Posterior cingulate gyrus (tissue), 11 donors: ENCODE measurements at regions of chr4 and their contacts with region 1.

Region 1: GRCh38 chr4:151117371-151117962 is 18.0 kb downstream of the RPS3A start:
- DNase-seq: peak in 6 of 10 donors; percentile 29 to 74 (median 50)

Region 2: DNA sequence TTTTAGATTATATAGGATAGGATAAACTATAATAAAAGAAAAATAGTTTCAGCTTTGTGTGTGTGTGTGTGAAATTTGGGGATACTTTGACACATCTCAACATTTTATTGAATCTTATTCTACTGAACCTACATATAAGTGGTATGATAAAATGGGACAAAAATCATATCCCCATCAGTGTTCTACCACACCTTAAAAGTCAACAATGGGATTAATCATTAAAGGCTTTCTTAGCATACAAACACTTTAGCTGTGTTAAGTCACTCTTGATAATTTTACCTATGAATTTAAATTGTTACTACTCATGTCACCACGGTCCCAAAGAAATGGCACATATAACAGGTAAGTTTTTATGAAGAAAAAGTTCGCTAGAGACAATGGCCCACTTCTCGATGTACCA is 64.7 kb before region 1 on chr4:
- intact Hi-C with region 1: no loop called
- DNase-seq: no peak

Region 3: DNA sequence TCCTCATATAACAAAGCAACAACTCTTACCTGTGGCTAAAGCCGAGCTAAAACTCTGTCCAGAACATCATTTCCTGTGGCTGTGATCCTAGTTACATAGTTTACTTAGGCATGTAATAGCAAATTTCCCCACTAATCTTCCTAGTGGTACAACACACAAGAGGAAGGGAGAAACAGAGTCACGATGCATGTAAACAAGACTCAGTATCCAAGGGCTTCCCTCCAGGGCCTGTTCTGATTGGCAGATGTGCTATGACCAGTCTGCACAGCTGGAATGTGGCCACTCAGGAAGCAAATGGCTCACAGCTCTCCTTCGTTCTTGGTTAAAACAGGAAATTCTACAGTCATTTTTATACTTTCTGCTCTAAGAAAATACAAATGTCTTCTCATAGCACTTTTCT is 110.3 kb after region 1 on chr4:
- intact Hi-C with region 1: loop called (anchors 5 kb)
- DNase-seq: peak in 6 of 10 donors; percentile 41 to 87 (median 50)

Region 4: DNA sequence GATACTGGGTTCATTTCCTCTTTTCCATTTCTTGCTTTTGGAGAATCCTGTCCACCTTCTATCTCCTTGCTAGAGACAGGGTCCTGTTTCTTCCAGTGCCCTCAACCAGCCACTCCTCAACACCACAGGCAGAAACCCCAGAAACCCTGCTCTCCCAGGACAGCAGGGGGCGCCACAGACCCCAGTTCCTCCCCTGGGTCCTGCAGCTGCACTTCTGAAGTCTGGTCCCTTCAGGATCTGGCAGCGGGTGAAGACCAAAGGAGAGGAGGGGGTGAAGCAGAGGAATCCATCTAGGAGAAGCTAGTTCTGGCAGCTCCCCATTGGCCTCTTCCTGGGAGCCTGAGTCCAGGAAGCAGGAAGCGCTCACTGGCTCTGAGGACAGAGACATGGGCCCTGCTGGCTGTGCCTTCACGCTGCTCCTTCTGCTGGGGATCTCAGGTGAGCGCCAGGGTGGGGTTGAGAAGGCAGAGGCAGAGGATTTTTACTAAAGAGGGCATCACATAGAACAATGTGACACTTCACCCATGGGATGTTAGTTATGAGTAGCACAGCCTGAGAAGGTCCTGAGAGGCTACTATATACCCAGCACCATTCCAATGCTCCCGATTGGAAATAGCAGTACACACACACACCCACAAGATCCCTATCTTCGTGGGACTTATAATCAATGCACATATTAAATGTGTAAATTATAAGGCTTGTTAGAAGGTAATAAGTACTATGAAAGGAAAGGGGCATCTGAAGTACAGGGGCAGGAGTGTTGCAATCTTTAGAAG is 159.5 kb after region 1 on chr4 and contains the start of gene PRSS48:
- intact Hi-C with region 1: loop called (anchors 1 kb)
- DNase-seq: peak; percentile 69 to 97 (median 83)

Region 5: DNA sequence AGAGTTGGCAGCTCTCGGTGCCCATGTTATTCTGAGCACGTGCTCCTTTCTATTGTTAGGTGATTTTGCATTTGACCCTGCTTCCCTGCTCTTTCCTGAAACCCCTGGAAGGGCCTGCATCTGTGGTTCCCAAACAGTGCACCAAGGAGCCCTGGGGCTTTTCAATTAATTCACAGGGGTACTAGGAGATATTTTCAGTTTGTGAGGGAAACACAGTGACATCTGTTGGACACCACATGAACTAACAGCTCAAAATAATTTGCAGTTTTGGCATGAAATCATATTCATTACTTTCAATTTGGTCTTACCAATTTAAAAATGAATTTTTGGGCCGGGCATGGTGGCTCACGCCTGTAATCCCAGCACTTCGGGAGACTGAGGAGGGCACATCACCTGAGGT is 486.8 kb after region 1 on chr4:
- intact Hi-C with region 1: loop called (anchors 10 kb)
- DNase-seq: no peak

Region 6: DNA sequence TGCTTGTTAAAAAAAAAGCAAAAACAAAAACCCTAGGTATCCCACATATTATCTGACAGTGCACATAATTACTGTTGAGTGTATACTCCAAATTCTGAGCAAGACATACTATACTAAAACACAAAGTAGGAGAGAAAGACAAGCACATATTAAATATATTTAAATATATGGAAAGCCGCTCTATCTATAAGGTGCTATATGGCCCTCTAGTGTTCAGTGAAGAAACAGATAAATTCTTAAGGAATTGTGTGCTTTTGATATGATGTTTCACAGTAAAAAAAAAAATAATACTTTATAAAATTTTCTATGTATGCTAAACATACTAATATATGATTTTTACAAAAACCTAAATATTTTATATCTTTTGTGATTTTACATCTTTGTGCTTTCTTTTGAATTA is 1280.6 kb after region 1 on chr4:
- intact Hi-C with region 1: loop called (anchors 10 kb)
- DNase-seq: no peak